Naive thymus-derived CD4-positive, alpha-beta T cell (primary cell): ENCODE measurements at regions of chr5 and their contacts with region 1.

Region 1: GRCh38 chr5:180802325-180803180 is at the start of gene MGAT1:
- DNase-seq: peak; percentile 47 to 91 (median 59)
- ATAC-seq: peak; percentile 80
- H3K4me3 ChIP-seq: peak within 1 kb of the TSS; percentile 77
- H3K4me3 Mint-ChIP-seq: peak within 1 kb of the TSS; percentile 89 to 99 (median 96)
- H3K27ac ChIP-seq: peak within 1 kb of the TSS; percentile 96
- H3K27ac Mint-ChIP-seq: peak within 1 kb of the TSS; percentile 91 to 100 (median 98)
- H3K4me1 ChIP-seq: peaks cover 75 to 84% of the 10 kb centered on the region in 2 donors
- H3K4me1 Mint-ChIP-seq: peaks cover 76 to 83% (median 79%) of the 10 kb centered on the region in 7 donors
- H3K27me3 ChIP-seq: no peaks in the 10 kb centered on the region
- H3K27me3 Mint-ChIP-seq: no peaks in the 10 kb centered on the region
- total RNA-seq, gene MGAT1: 101 to 206 (median 196) TPM

Region 2: GRCh38 chr5:179549973-179550510 is 1252.5 kb before region 1 on chr5:
- CTCF ChIA-PET with region 1: no interaction called
- POLR2A ChIA-PET with region 1: no interaction called
- intact Hi-C with region 1: no loop called
- DNase-seq: peak in 2 of 9 donors; percentile 55 to 68
- ATAC-seq: peak; percentile 12
- H3K4me3 ChIP-seq: peak overlapping the region; percentile 84
- H3K4me3 Mint-ChIP-seq: peak overlapping the region; percentile 93 to 98 (median 95)
- H3K27ac ChIP-seq: peak overlapping the region; percentile 87
- H3K27ac Mint-ChIP-seq: peak overlapping the region; percentile 89 to 99 (median 98)
- H3K4me1 ChIP-seq: peaks cover 12 to 15% of the 10 kb centered on the region in 2 donors
- H3K4me1 Mint-ChIP-seq: peaks cover 10 to 45% (median 32%) of the 10 kb centered on the region in 7 donors
- H3K27me3 ChIP-seq: no peaks in the 10 kb centered on the region
- H3K27me3 Mint-ChIP-seq: peaks cover 0 to 4% (median 0%) of the 10 kb centered on the region in 5 donors

Region 3: DNA sequence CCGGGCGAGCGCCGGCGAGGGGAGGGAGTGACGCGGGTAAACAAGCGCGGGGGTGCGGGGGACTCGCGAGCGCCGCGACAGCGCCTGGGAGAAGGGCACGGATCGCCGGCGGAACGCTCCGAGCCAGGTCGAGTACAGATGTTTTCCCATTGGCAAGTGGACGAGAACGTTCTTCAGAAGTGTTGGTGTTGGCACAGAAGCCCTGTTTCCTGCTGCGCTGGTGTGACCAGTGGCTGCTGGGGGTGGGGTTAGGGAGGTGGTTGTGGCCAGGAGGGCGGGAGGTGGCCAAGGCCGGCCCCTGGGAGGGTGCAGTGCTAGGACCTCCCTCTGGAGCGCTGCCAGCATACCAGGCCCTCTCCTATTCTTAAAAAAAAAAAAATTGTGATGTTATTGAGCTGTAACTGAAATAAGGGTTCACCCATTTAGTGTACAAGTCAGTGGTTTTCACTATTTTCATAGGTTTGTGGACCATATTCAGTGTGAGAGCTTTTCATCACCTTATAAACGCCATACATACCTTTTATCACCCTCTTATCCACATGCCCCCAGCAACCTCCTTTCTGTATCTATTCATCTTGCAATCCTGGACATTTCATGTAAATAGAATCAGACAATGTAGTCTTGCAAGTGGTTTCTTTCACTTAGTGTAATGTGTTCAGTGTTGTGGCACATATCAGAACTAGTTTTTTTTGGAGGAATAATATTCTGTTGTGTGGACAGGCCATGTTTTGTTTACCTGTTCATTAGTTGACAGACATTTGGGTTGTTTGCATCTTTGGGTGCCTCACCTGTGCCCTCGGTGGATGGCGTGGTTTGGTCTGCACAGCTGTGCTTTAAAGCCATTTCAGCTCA is 980.7 kb before region 1 on chr5:
- CTCF ChIA-PET with region 1: no interaction called
- POLR2A ChIA-PET with region 1: no interaction called
- intact Hi-C with region 1: loop called in 1 of 2 experiments (anchors 2 kb)
- DNase-seq: peak; percentile 72 to 88 (median 85)
- ATAC-seq: peak; percentile 73
- H3K4me3 ChIP-seq: peak overlapping the region; percentile 87
- H3K4me3 Mint-ChIP-seq: peak overlapping the region; percentile 88 to 98 (median 95)
- H3K27ac ChIP-seq: peak overlapping the region; percentile 96
- H3K27ac Mint-ChIP-seq: peak overlapping the region; percentile 79 to 97 (median 94)
- H3K4me1 ChIP-seq: peaks cover 31 to 36% of the 10 kb centered on the region in 2 donors
- H3K4me1 Mint-ChIP-seq: peaks cover 30 to 62% (median 45%) of the 10 kb centered on the region in 7 donors
- H3K27me3 ChIP-seq: no peaks in the 10 kb centered on the region
- H3K27me3 Mint-ChIP-seq: no peaks in the 10 kb centered on the region

Region 4: GRCh38 chr5:180689071-180689694 is 113.4 kb before region 1 on chr5:
- CTCF ChIA-PET with region 1: no interaction called
- POLR2A ChIA-PET with region 1: interaction called, 5 read pairs
- intact Hi-C with region 1: loop called in 1 of 2 experiments (anchors 2 kb)
- DNase-seq: peak in 8 of 9 donors; percentile 27 to 80 (median 74)
- ATAC-seq: peak; percentile 88
- H3K4me3 ChIP-seq: peak overlapping the region; percentile 35
- H3K4me3 Mint-ChIP-seq: peak overlapping the region; percentile 52 to 87 (median 79)
- H3K27ac ChIP-seq: peak overlapping the region; percentile 75
- H3K27ac Mint-ChIP-seq: peak overlapping the region; percentile 51 to 98 (median 97)
- H3K4me1 ChIP-seq: peaks cover 29 to 75% of the 10 kb centered on the region in 2 donors
- H3K4me1 Mint-ChIP-seq: peaks cover 22 to 85% (median 80%) of the 10 kb centered on the region in 7 donors
- H3K27me3 ChIP-seq: no peaks in the 10 kb centered on the region
- H3K27me3 Mint-ChIP-seq: peaks cover 0 to 10% (median 0%) of the 10 kb centered on the region in 5 donors

Region 5: DNA sequence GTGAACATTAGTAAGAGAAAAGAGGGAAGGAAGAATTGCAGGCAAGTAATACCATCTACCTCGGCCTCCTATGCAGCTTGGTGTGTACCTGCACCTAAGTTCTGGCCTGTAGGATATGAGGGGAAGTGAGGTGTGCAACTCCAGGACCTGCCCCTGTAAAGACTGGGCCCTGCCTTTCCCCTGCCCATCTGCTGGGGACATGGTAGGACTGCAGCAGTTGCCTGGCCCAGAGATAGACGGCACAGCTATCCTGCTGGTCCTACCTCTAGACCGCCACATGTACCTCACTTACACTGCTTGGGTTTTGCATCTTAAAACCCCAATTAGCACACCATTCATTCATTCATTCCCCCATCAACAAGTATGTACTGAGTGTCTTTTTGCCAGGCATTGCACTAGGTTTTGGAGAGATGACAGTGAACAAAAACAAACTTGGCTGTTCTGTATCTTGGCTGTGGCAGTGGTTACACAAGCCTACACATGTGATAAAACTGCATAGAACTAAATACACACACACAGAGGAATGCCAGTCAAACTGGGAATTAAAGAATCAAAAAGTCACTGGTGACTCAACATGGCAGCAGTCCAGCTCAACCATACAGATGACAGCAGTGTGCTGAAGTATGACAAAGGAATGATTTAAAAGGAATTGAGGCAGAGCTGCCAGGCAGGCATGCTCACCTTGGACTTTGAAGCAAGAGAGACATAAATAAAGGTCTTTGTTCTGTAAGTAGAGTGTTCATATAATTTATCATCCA is 23.4 kb after region 1 on chr5:
- CTCF ChIA-PET with region 1: interaction called, 6 read pairs
- POLR2A ChIA-PET with region 1: interaction called, 273 read pairs
- intact Hi-C with region 1: loop called (anchors 1 kb)
- DNase-seq: no peak
- ATAC-seq: no peak
- H3K4me3 ChIP-seq: no peak overlapping the region
- H3K4me3 Mint-ChIP-seq: peak overlapping the region in 2 of 10 donors; percentile 8 to 30
- H3K27ac ChIP-seq: no peak overlapping the region
- H3K27ac Mint-ChIP-seq: peak overlapping the region in 4 of 9 donors; percentile 17 to 80 (median 60)
- H3K4me1 ChIP-seq: peaks cover 12 to 14% of the 10 kb centered on the region in 2 donors
- H3K4me1 Mint-ChIP-seq: peaks cover 31 to 58% (median 44%) of the 10 kb centered on the region in 7 donors
- H3K27me3 ChIP-seq: no peaks in the 10 kb centered on the region
- H3K27me3 Mint-ChIP-seq: no peaks in the 10 kb centered on the region

Region 6: GRCh38 chr5:181159286-181159829 is 356.8 kb after region 1 on chr5:
- CTCF ChIA-PET with region 1: no interaction called
- POLR2A ChIA-PET with region 1: no interaction called
- intact Hi-C with region 1: loop called in 1 of 2 experiments (anchors 2 kb)
- DNase-seq: peak; percentile 79 to 95 (median 87)
- ATAC-seq: peak; percentile 80
- H3K4me3 ChIP-seq: no peak overlapping the region
- H3K4me3 Mint-ChIP-seq: peak overlapping the region; percentile 57 to 83 (median 72)
- H3K27ac ChIP-seq: peak overlapping the region; percentile 89
- H3K27ac Mint-ChIP-seq: peak overlapping the region; percentile 73 to 97 (median 94)
- H3K4me1 ChIP-seq: peaks cover 15 to 19% of the 10 kb centered on the region in 2 donors
- H3K4me1 Mint-ChIP-seq: peaks cover 13 to 33% (median 27%) of the 10 kb centered on the region in 7 donors
- H3K27me3 ChIP-seq: no peaks in the 10 kb centered on the region
- H3K27me3 Mint-ChIP-seq: peaks cover 0 to 29% (median 17%) of the 10 kb centered on the region in 5 donors